Sigmoid colon (tissue), 7 donors: ENCODE measurements at regions of chr11 and their contacts with region 1.

Region 1: DNA sequence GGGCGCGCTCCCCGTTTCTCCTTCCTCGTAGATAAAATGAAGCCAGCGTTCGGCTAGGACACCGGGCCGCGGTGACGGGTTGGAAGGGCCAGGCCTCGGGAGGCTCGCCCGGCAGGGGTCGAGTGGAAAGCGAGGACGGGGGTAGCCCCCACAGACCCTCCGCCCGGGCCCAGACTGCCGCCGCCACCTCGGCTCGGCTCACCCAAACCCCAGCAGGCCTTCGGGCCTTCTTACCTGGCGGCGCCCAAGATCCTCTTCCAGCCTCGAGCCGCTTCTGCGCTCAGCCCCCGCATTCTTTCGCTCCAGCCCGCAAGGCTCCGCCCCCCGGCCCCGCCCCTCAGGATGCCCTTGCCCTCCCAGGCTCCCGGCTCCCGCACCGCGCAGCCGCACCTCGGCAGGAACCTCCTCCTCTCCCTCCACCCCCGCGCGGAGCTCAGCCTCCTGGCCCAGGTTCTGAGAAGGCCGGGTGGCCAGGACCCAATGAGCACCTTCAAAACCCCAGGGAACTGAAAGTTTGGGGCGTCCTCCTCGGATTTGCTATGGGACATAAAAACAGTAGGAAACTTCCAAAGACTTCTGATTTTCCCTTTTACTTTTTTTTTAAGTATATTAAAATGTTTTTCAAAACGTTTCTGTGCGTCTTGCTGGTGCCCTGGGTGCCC is at the start of gene CD59:
- DNase-seq: peak; percentile 98
- H3K4me3 ChIP-seq: peak within 1 kb of the TSS; percentile 73 to 91 (median 89)
- H3K27ac ChIP-seq: peak within 1 kb of the TSS; percentile 82 to 93 (median 92)
- H3K4me1 ChIP-seq: peaks cover 0 to 49% (median 41%) of the 10 kb centered on the region in 4 donors
- H3K27me3 ChIP-seq: no peaks in the 10 kb centered on the region
- CTCF ChIP-seq: no peak
- EP300 ChIP-seq: no peak
- POLR2A ChIP-seq: peak; percentile 81 to 83
- total RNA-seq, gene CD59: 160 to 206 (median 183) TPM

Region 2: GRCh38 chr11:33161120-33162005 is 574.9 kb before region 1 on chr11 and contains the start of gene CSTF3:
- intact Hi-C with region 1: loop called (anchors 5 kb)
- DNase-seq: peak; percentile 100
- H3K4me3 ChIP-seq: peak within 1 kb of the TSS; percentile 66 to 81 (median 78)
- H3K27ac ChIP-seq: peak within 1 kb of the TSS; percentile 80 to 84 (median 83)
- H3K4me1 ChIP-seq: peaks cover 0 to 35% (median 24%) of the 10 kb centered on the region in 4 donors
- H3K27me3 ChIP-seq: no peaks in the 10 kb centered on the region
- CTCF ChIP-seq: peak; percentile 12 to 87 (median 77)
- EP300 ChIP-seq: peak in 1 of 4 donors; percentile 37
- POLR2A ChIP-seq: peak; percentile 19 to 57
- total RNA-seq, gene CSTF3: 9.9 to 14.6 (median 11.6) TPM

Region 3: DNA sequence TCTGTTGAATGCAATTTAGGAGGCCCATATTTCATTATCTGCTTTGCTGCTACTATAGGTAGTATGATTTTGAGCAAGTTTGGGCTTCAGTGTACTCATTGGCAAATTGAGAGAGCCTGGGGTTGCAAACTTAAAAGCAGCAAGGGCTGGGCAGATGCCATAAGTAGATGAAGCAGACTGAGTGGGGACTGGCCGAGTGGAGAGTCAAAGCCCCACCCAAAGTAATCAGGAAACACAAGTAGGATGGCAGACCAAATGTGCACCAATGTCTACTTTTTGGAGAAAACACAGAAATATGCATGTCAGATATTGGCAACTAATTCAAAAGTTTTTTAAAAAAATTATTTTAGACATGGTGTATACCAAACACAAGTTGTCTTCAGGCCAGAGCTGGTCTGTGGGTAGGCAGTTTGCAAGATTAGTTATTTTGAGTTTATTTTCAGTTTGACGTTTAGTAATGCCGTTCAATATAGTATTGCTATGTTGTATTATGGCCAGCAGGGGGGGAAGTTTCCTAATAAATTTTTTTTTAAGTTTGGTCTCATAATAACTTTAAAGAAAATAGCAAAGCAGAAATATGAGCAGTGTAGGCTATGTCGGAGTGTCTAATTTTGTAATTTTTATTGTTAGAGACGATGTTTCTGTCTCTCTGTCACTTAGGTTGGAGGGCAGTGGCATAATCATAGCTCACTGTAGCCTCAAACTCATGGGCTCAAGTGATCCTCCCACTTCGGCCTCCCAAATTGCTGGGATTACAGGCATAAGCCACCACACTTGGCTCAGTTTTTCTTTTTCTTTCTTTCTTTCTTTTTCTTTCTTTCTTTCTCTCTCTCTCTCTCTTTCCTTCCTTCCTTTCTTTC is 374.0 kb before region 1 on chr11:
- intact Hi-C with region 1: loop called (anchors 10 kb)
- DNase-seq: no peak
- H3K4me3 ChIP-seq: no peak overlapping the region
- H3K27ac ChIP-seq: no peak overlapping the region
- H3K4me1 ChIP-seq: no peaks in the 10 kb centered on the region
- H3K27me3 ChIP-seq: no peaks in the 10 kb centered on the region
- CTCF ChIP-seq: peak; percentile 12 to 73 (median 38)
- EP300 ChIP-seq: no peak
- POLR2A ChIP-seq: no peak

Region 4: DNA sequence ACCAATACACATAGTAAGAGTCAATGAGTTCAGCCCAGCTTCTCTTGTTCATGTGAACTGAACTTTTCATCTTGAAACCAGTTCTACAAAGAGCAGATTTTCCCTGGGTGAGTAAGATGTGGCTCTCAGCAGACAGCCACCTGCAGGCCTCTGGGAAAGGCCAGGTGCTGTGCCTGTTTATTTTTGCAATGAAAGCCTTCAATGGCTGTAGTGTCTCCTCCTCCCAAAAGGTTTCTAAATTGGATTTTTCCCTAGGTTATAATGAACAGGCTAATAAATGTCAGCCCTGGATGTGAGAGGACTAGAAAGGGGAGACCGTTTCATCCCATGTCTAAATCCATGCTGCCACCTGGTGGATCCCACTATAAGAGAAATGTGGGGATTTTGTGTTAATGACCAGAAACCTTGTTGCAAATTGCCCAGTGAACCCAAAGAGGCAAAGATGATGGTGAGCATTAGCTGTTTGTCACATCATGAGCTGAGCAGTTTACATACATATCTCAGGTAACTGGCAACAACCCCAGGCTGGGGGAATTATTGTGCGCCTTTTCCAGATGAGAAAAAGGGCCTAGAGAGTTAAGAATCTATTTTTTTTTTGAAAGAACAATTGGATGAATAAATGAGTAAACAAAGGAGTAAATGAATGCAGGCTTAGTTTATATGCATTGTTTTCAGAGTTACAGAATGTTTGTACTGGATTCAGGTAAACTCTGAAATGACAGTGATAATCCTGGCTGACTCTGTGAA is 48.4 kb before region 1 on chr11:
- intact Hi-C with region 1: loop called (anchors 5 kb)
- DNase-seq: no peak
- H3K4me3 ChIP-seq: no peak overlapping the region
- H3K27ac ChIP-seq: no peak overlapping the region
- H3K4me1 ChIP-seq: peaks cover 0 to 24% (median 20%) of the 10 kb centered on the region in 4 donors
- H3K27me3 ChIP-seq: peaks cover 0 to 4% (median 0%) of the 10 kb centered on the region in 3 donors
- CTCF ChIP-seq: peak in 2 of 4 experiments; percentile 38 to 46
- EP300 ChIP-seq: no peak
- POLR2A ChIP-seq: no peak

Region 5: GRCh38 chr11:33700425-33701271 is 35.6 kb before region 1 on chr11 and contains the start of gene C11orf91:
- intact Hi-C with region 1: loop called (anchors 5 kb)
- DNase-seq: peak; percentile 97
- H3K4me3 ChIP-seq: peak within 1 kb of the TSS; percentile 47 to 64 (median 60)
- H3K27ac ChIP-seq: peak within 1 kb of the TSS; percentile 53 to 75 (median 74)
- H3K4me1 ChIP-seq: peaks cover 0 to 23% (median 17%) of the 10 kb centered on the region in 4 donors
- H3K27me3 ChIP-seq: no peaks in the 10 kb centered on the region
- CTCF ChIP-seq: no peak
- EP300 ChIP-seq: no peak
- POLR2A ChIP-seq: peak in 1 of 2 donors; percentile 17
- total RNA-seq, gene C11orf91: not detected

Region 6: DNA sequence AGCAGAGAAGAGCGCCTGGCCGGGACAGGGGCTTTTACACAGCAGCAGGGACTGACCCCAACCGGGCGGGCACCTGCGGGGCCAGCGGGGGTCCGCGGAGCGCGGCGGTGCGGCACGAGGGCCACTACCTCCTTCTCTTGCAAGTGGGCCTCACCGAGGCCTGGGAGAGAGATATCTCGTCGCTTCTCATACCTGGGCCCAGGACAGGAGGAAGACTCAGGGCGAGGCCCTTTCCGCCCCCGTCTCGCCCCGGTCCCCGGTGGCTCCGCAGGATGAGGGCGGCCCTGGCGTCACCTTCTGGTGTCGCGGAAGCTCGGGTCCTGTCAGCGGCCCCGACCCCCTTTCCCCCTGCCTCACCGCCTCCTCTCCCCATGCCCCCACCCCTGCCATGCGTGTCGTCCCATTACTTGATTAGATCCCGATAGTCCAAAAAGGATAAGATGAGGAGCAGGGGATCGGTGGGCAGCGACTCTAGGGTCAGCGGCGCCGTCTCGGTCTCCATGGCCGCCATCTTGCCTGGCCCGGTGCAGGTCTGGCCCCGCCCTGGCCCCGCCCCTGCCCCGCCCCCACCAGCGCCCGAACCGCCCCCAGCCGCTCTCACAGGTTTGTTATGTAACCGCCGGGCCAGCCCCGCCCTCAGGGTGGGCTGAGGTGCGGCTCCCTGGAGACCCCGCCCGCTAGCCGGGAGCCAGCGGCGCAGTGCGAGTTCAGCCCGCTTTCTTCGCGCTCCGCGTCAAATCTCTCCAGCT is 37.9 kb after region 1 on chr11 and contains the start of gene FBXO3:
- intact Hi-C with region 1: loop called (anchors 5 kb)
- DNase-seq: peak; percentile 95
- H3K4me3 ChIP-seq: peak within 1 kb of the TSS; percentile 83 to 97 (median 94)
- H3K27ac ChIP-seq: peak within 1 kb of the TSS; percentile 89 to 94 (median 90)
- H3K4me1 ChIP-seq: peaks cover 0 to 43% (median 39%) of the 10 kb centered on the region in 4 donors
- H3K27me3 ChIP-seq: no peaks in the 10 kb centered on the region
- CTCF ChIP-seq: no peak
- EP300 ChIP-seq: no peak
- POLR2A ChIP-seq: no peak
- total RNA-seq, gene FBXO3: 36.8 to 53.5 (median 50.4) TPM